Activated CD4-positive, alpha-beta T cell treated with anti-CD3 and anti-CD28 coated beads for 36 hours (primary cell): ENCODE measurements at regions of chr1 and their contacts with region 1.

Region 1: DNA sequence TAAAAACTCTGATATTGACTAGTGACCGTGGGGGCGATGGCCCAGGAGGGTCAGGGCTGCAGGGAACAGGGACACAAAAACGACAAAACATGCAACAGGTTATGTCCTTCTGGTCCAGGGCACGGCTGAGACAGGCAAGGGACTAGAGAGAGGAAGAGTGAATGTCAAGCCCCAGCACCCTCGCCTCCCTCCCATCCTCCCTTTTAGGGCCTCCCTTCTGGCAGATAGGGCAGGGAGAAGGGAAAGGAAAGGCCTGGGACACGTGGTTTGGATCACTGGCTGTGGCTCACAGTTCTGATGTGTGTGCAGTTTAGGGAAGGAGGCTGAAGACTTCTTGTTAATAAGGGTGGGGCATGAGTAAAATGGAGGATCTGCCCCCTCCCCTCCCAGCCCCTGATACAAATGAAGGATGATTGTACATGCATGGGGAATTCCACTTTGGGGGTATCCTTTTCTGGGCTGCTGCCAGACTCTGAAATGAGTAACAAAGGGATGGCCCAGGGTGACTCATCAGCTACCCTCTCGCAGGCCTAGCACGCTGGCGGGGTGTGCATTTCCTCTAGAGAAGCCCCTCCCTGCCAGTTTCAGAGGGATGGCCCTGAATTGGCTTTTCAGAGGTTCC is 14.2 kb downstream of the CAPN2 start:
- DNase-seq: peak; percentile 94
- ATAC-seq: peak; percentile 98
- H3K4me3 Mint-ChIP-seq: peak overlapping the region; percentile 44
- H3K27ac Mint-ChIP-seq: peak overlapping the region; percentile 87
- H3K4me1 Mint-ChIP-seq: peaks cover 63% of the 10 kb centered on the region
- H3K27me3 Mint-ChIP-seq: no peaks in the 10 kb centered on the region

Region 2: DNA sequence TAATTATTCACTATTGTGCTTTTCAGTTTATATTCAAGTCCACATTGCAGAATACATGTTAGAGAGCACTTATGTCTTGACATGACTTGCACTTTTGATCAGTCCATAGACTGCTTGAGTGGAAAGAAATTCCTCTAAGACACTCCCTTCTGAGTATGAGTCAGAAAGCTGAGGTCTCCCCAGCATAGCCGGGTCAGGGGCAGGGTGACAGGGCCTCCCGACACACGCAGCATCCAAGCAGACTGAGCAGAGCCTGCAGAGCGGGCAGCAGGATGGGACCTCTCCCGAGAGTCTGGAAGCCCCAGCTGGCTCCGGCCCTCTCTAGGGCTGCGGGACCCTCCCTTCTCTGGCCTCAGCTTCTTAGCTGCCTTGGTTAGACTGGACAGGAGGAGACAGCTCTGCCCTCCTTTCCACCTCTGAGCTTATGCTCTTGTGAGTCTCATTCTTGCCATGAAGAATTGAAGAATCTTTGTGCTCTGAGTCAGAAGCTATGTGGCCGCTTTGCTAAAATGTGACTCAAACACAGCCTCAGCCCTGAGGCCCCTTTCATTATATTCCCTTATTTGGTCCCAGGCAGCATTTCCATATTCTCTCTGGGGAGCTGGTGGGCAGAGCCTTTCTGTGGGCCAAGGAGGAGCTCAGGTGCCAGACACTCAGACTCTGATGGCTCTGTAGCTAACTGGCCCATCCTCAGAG is 25.4 kb before region 1 on chr1:
- CTCF ChIA-PET with region 1: interaction called, 6 read pairs
- POLR2A ChIA-PET with region 1: no interaction called
- intact Hi-C with region 1: loop called (anchors 1 to 2 kb)
- DNase-seq: peak; percentile 59
- ATAC-seq: peak; percentile 75
- H3K4me3 Mint-ChIP-seq: no peak overlapping the region
- H3K27ac Mint-ChIP-seq: peak overlapping the region; percentile 55
- H3K4me1 Mint-ChIP-seq: peaks cover 34% of the 10 kb centered on the region
- H3K27me3 Mint-ChIP-seq: peaks cover 4% of the 10 kb centered on the region

Region 3: GRCh38 chr1:223712194-223712849 is 14.2 kb before region 1 on chr1 and contains the start of gene CAPN2:
- CTCF ChIA-PET with region 1: interaction called, 3 read pairs
- POLR2A ChIA-PET with region 1: no interaction called
- intact Hi-C with region 1: loop called (anchors 1 kb)
- DNase-seq: peak; percentile 76
- ATAC-seq: peak; percentile 47
- H3K4me3 Mint-ChIP-seq: peak within 1 kb of the TSS; percentile 80
- H3K27ac Mint-ChIP-seq: peak within 1 kb of the TSS; percentile 82
- H3K4me1 Mint-ChIP-seq: peaks cover 62% of the 10 kb centered on the region
- H3K27me3 Mint-ChIP-seq: no peaks in the 10 kb centered on the region
- total RNA-seq, gene CAPN2: 31.1 to 33.1 TPM

Region 4: GRCh38 chr1:223831755-223832636 is 105.5 kb after region 1 on chr1:
- CTCF ChIA-PET with region 1: no interaction called
- POLR2A ChIA-PET with region 1: no interaction called
- intact Hi-C with region 1: loop called in 1 of 2 experiments (anchors 2 kb)
- DNase-seq: no peak
- ATAC-seq: peak; percentile 71
- H3K4me3 Mint-ChIP-seq: no peak overlapping the region
- H3K27ac Mint-ChIP-seq: no peak overlapping the region
- H3K4me1 Mint-ChIP-seq: peaks cover 29% of the 10 kb centered on the region
- H3K27me3 Mint-ChIP-seq: no peaks in the 10 kb centered on the region

Region 5: GRCh38 chr1:224113918-224114786 is 387.7 kb after region 1 on chr1 and contains the start of gene FBXO28:
- CTCF ChIA-PET with region 1: no interaction called
- POLR2A ChIA-PET with region 1: no interaction called
- intact Hi-C with region 1: loop called in 1 of 2 experiments (anchors 5 kb)
- DNase-seq: peak; percentile 98
- ATAC-seq: peak; percentile 99
- H3K4me3 Mint-ChIP-seq: peak within 1 kb of the TSS; percentile 85
- H3K27ac Mint-ChIP-seq: peak within 1 kb of the TSS; percentile 96
- H3K4me1 Mint-ChIP-seq: peaks cover 25% of the 10 kb centered on the region
- H3K27me3 Mint-ChIP-seq: no peaks in the 10 kb centered on the region
- total RNA-seq, gene FBXO28: 17.1 to 19.7 TPM

Region 6: GRCh38 chr1:225441314-225442122 is 1715.0 kb after region 1 on chr1:
- CTCF ChIA-PET with region 1: no interaction called
- POLR2A ChIA-PET with region 1: interaction called, 11 read pairs
- intact Hi-C with region 1: no loop called
- DNase-seq: no peak
- ATAC-seq: no peak
- H3K4me3 Mint-ChIP-seq: no peak overlapping the region
- H3K27ac Mint-ChIP-seq: peak overlapping the region; percentile 82
- H3K4me1 Mint-ChIP-seq: peaks cover 49% of the 10 kb centered on the region
- H3K27me3 Mint-ChIP-seq: no peaks in the 10 kb centered on the region